ENCODE measurements at regions of chr2 and their contacts with region 1.

Region 1: DNA sequence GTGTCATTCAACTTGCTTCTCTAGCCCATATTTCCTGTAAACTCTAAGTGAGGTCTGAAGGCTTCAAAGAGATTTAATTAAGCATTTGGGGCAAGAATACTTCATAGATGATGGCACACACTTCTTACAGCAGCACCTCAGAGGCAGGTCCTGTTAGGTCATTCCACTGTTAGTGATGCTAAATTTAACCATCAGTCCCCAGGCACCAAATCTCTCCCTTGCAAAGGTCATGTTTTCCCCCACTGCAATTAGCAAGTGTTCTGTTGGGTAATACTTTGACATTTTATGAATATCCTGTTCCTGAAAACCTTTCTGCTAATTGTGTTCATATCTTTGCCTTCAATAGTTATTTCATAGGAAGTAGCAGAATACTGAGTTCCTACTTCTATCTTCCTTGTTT is 117.0 kb downstream of the STK39 start:
- DNase-seq: no peak
- ATAC-seq: no peak
- H3K4me3 ChIP-seq: no peak overlapping the region
- H3K4me3 Mint-ChIP-seq: no peak overlapping the region
- H3K27ac ChIP-seq: no peak overlapping the region
- H3K27ac Mint-ChIP-seq: no peak overlapping the region
- H3K4me1 ChIP-seq: no peaks in the 10 kb centered on the region
- H3K4me1 Mint-ChIP-seq: no peaks in the 10 kb centered on the region
- H3K27me3 ChIP-seq: no peaks in the 10 kb centered on the region
- H3K27me3 Mint-ChIP-seq: no peaks in the 10 kb centered on the region
- CTCF ChIP-seq: no peak

Region 2: DNA sequence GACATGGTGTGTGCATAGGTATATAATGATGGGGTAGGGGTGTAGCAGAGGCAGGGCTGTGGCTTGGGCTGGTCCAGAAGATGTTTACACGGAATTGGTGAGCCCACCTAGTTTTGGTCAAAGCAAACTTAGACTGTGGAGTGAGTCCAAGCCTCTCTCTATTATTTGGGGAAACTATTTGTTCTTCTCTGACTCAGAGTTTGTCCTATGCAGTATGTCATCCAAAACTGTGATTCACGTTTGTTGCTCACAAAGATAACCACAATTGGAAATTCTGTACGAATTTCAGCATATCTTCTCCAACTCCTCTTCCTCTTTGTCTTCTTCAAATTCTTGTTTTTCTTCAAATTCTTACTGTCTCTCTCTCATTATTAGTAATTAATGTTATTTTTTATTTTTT is 949.2 kb before region 1 on chr2:
- CTCF ChIA-PET with region 1: no interaction called
- POLR2A ChIA-PET with region 1: no interaction called
- intact Hi-C with region 1: no loop called
- DNase-seq: no peak
- ATAC-seq: no peak
- H3K4me3 ChIP-seq: no peak overlapping the region
- H3K4me3 Mint-ChIP-seq: no peak overlapping the region
- H3K27ac ChIP-seq: no peak overlapping the region
- H3K27ac Mint-ChIP-seq: no peak overlapping the region
- H3K4me1 ChIP-seq: no peaks in the 10 kb centered on the region
- H3K4me1 Mint-ChIP-seq: no peaks in the 10 kb centered on the region
- H3K27me3 ChIP-seq: no peaks in the 10 kb centered on the region
- H3K27me3 Mint-ChIP-seq: no peaks in the 10 kb centered on the region
- CTCF ChIP-seq: no peak

Region 3: GRCh38 chr2:167987558-167987957 is 142.8 kb before region 1 on chr2:
- CTCF ChIA-PET with region 1: no interaction called
- POLR2A ChIA-PET with region 1: no interaction called
- intact Hi-C with region 1: no loop called
- DNase-seq: no peak
- ATAC-seq: no peak
- H3K4me3 ChIP-seq: no peak overlapping the region
- H3K4me3 Mint-ChIP-seq: no peak overlapping the region
- H3K27ac ChIP-seq: no peak overlapping the region
- H3K27ac Mint-ChIP-seq: no peak overlapping the region
- H3K4me1 ChIP-seq: no peaks in the 10 kb centered on the region
- H3K4me1 Mint-ChIP-seq: no peaks in the 10 kb centered on the region
- H3K27me3 ChIP-seq: no peaks in the 10 kb centered on the region
- H3K27me3 Mint-ChIP-seq: no peaks in the 10 kb centered on the region
- CTCF ChIP-seq: no peak

Region 4: GRCh38 chr2:168097431-168097830 is 32.9 kb before region 1 on chr2:
- CTCF ChIA-PET with region 1: no interaction called
- POLR2A ChIA-PET with region 1: no interaction called
- intact Hi-C with region 1: no loop called
- DNase-seq: no peak
- ATAC-seq: no peak
- H3K4me3 ChIP-seq: no peak overlapping the region
- H3K4me3 Mint-ChIP-seq: no peak overlapping the region
- H3K27ac ChIP-seq: no peak overlapping the region
- H3K27ac Mint-ChIP-seq: no peak overlapping the region
- H3K4me1 ChIP-seq: no peaks in the 10 kb centered on the region
- H3K4me1 Mint-ChIP-seq: no peaks in the 10 kb centered on the region
- H3K27me3 ChIP-seq: no peaks in the 10 kb centered on the region
- H3K27me3 Mint-ChIP-seq: no peaks in the 10 kb centered on the region
- CTCF ChIP-seq: no peak

Region 5: DNA sequence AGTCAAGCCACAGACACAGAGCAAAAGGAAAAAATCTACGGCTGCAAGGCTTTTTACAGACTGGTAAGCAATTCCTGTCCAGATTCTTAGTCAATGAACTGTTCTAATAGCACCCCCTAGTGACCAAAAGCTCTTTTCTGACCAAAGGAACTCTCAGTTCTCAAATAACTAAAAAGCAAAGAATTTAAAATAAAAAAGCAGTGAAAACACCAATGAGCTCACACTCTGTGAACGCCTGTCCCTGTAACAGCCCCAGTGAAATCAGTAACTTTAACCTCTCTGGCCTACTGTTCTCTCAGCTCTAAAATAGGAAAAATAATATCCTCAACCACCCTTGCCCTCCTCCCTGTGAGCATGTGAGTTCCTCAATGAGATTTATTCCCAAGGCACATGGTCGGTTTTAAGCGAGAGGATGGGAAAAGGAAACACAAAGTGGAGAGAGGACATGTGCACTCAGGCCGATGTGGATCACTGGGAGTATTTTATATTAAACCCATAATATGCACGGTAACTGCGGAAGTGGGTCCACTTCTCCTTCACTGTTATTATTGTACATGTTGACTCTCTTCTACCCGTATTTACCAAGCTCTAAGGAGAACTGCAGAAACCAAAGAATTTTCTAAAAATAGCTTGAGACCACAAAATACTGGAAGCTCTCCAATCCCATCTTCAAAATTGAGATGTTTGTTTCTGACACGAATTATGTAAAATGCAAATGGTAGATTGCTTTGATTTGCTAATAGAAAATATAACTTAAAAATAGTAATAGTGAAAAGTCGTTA is 11.4 kb before region 1 on chr2:
- CTCF ChIA-PET with region 1: interaction called, 10 read pairs
- POLR2A ChIA-PET with region 1: no interaction called
- intact Hi-C with region 1: no loop called
- DNase-seq: peak in 3 of 14 experiments; percentile 56 to 60 (median 56)
- ATAC-seq: no peak
- H3K4me3 ChIP-seq: no peak overlapping the region
- H3K4me3 Mint-ChIP-seq: no peak overlapping the region
- H3K27ac ChIP-seq: no peak overlapping the region
- H3K27ac Mint-ChIP-seq: no peak overlapping the region
- H3K4me1 ChIP-seq: no peaks in the 10 kb centered on the region
- H3K4me1 Mint-ChIP-seq: no peaks in the 10 kb centered on the region
- H3K27me3 ChIP-seq: no peaks in the 10 kb centered on the region
- H3K27me3 Mint-ChIP-seq: no peaks in the 10 kb centered on the region
- CTCF ChIP-seq: peak; percentile 51

Region 6: GRCh38 chr2:168773719-168774521 is 643.6 kb after region 1 on chr2:
- CTCF ChIA-PET with region 1: no interaction called
- POLR2A ChIA-PET with region 1: no interaction called
- intact Hi-C with region 1: no loop called
- DNase-seq: peak in 6 of 14 experiments; percentile 3 to 36 (median 20)
- ATAC-seq: no peak
- H3K4me3 ChIP-seq: no peak overlapping the region
- H3K4me3 Mint-ChIP-seq: no peak overlapping the region
- H3K27ac ChIP-seq: no peak overlapping the region
- H3K27ac Mint-ChIP-seq: no peak overlapping the region
- H3K4me1 ChIP-seq: no peaks in the 10 kb centered on the region
- H3K4me1 Mint-ChIP-seq: no peaks in the 10 kb centered on the region
- H3K27me3 ChIP-seq: no peaks in the 10 kb centered on the region
- H3K27me3 Mint-ChIP-seq: no peaks in the 10 kb centered on the region
- CTCF ChIP-seq: no peak

Measured in CD4-positive, alpha-beta T cell (primary cell).